ENCODE measurements at regions of chr1 and their contacts with region 1.

Region 1: GRCh38 chr1:33256701-33257399 is 558 bp downstream of the ZNF362 start:
- DNase-seq: peak; percentile 72
- ATAC-seq: peak; percentile 50
- H3K4me3 Mint-ChIP-seq: peak overlapping the region; percentile 95
- H3K27ac Mint-ChIP-seq: peak overlapping the region; percentile 98
- H3K4me1 Mint-ChIP-seq: peaks cover 39% of the 10 kb centered on the region
- H3K27me3 Mint-ChIP-seq: no peaks in the 10 kb centered on the region

Region 2: DNA sequence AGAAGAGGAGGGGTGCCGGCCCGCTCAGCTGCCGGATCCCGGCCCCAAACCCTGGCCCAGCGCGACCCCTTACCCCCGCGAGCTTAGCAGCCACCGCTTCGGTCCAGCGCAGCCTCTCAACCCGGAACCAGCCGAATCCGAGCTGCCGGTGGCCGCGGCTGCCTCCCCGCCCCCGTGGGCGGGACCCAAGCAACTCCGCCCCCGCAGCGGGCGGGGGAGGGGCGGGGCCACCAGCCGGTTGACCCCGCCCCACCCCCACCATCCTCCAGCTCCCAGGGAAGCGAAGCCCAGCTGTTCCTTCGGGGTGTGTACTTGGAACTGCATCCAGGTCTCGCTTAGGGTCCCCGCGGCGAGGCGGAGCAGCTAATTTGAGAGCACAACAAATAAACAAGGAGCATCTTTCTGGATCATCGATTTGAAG is 74.9 kb before region 1 on chr1 and contains the start of gene TRIM62:
- CTCF ChIA-PET with region 1: no interaction called
- POLR2A ChIA-PET with region 1: no interaction called
- intact Hi-C with region 1: loop called in 1 of 2 experiments (anchors 1 kb)
- DNase-seq: peak; percentile 84
- ATAC-seq: peak; percentile 35
- H3K4me3 Mint-ChIP-seq: peak within 1 kb of the TSS; percentile 79
- H3K27ac Mint-ChIP-seq: peak within 1 kb of the TSS; percentile 74
- H3K4me1 Mint-ChIP-seq: peaks cover 25% of the 10 kb centered on the region
- H3K27me3 Mint-ChIP-seq: peaks cover 5% of the 10 kb centered on the region
- total RNA-seq, gene TRIM62: 3.6 to 3.7 TPM

Region 3: GRCh38 chr1:33267468-33268205 is 10.8 kb after region 1 on chr1:
- CTCF ChIA-PET with region 1: no interaction called
- POLR2A ChIA-PET with region 1: no interaction called
- intact Hi-C with region 1: no loop called
- DNase-seq: no peak
- ATAC-seq: no peak
- H3K4me3 Mint-ChIP-seq: no peak overlapping the region
- H3K27ac Mint-ChIP-seq: no peak overlapping the region
- H3K4me1 Mint-ChIP-seq: peaks cover 10% of the 10 kb centered on the region
- H3K27me3 Mint-ChIP-seq: no peaks in the 10 kb centered on the region

Measured in activated CD4-positive, alpha-beta T cell treated with anti-CD3 and anti-CD28 coated beads for 36 hours (primary cell).